ENCODE measurements at regions of chr6 and their contacts with region 1.

Region 1: GRCh38 chr6:88165844-88166492 is at the start of gene CNR1:
- DNase-seq: peak in 1 of 2 donors; percentile 69
- H3K4me3 ChIP-seq: peak within 1 kb of the TSS; percentile 81 to 84
- H3K27ac ChIP-seq: peak within 1 kb of the TSS in 1 of 2 donors; percentile 43
- H3K4me1 ChIP-seq: peaks cover 0 to 3% of the 10 kb centered on the region in 2 donors
- H3K27me3 ChIP-seq: peaks cover 17% of the 10 kb centered on the region
- CTCF ChIP-seq: no peak
- total RNA-seq, gene CNR1: 35.0 TPM

Region 2: DNA sequence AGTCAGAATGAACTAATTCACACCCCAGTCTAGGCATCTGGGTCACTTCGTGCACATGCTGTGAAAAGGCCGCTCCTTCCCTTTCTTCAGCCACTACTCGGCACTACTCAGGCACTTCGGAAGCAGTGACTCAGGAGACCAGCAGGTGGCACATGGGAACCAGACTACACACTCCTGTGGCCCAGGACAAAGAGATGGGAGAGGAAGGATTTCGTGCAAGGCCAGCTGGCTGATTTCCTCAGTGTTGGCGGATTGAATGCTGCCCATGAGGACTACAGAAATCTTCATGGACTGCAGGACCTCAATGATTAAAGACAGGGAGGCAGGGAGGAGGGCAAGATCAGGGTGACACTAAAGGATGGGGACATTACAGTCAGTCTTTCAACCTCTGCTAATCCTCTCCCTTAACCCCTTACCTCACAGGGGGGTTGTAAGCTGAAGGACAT is 236.1 kb before region 1 on chr6:
- intact Hi-C with region 1: loop called (anchors 5 kb)
- DNase-seq: peak; percentile 37 to 91
- H3K4me3 ChIP-seq: no peak overlapping the region
- H3K27ac ChIP-seq: no peak overlapping the region
- H3K4me1 ChIP-seq: no peaks in the 10 kb centered on the region
- H3K27me3 ChIP-seq: no peaks in the 10 kb centered on the region
- CTCF ChIP-seq: peak; percentile 64 to 90 (median 79)

Region 3: GRCh38 chr6:87944541-87944954 is 221.4 kb before region 1 on chr6:
- intact Hi-C with region 1: loop called (anchors 5 kb)
- DNase-seq: peak; percentile 63 to 88
- H3K4me3 ChIP-seq: peak overlapping the region in 1 of 2 donors; percentile 18
- H3K27ac ChIP-seq: peak overlapping the region; percentile 73 to 80
- H3K4me1 ChIP-seq: peaks cover 3 to 14% of the 10 kb centered on the region in 2 donors
- H3K27me3 ChIP-seq: no peaks in the 10 kb centered on the region
- CTCF ChIP-seq: peak in 2 of 3 experiments; percentile 13 to 46

Region 4: GRCh38 chr6:88179692-88180091 is 13.7 kb after region 1 on chr6:
- intact Hi-C with region 1: no loop called
- DNase-seq: no peak
- H3K4me3 ChIP-seq: no peak overlapping the region
- H3K27ac ChIP-seq: no peak overlapping the region
- H3K4me1 ChIP-seq: no peaks in the 10 kb centered on the region
- H3K27me3 ChIP-seq: no peaks in the 10 kb centered on the region
- CTCF ChIP-seq: no peak

Region 5: DNA sequence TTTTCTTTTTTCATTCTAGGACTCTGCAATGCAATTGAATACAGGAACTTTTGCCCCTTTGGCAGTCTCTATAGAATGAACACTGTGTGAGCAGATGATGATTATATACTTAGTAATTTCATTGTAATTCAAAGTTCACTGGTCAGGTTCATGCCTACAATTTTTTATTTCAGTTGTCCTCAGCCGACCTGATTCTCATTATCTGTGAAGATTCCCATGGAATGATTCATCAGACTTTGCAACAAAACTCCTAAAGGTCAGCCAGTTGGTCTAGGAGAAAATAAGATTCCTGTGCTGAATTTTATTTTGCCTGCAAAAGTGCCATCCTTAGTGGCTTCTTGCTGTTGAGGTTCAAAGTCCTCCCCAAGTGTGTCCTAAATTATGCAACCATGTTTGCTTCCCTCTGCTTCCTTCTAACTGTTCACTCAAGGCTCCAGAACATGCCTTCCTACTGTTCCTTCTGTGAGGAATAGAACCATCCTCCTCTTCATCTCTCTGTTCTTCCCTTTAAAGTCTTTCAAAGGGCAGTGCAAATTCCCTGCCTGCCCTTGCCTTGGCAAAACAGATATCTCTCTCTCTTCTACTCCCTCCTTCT is 194.3 kb after region 1 on chr6:
- intact Hi-C with region 1: loop called (anchors 10 kb)
- DNase-seq: no peak
- H3K4me3 ChIP-seq: no peak overlapping the region
- H3K27ac ChIP-seq: no peak overlapping the region
- H3K4me1 ChIP-seq: no peaks in the 10 kb centered on the region
- H3K27me3 ChIP-seq: no peaks in the 10 kb centered on the region
- CTCF ChIP-seq: no peak

Region 6: GRCh38 chr6:88492824-88493223 is 326.9 kb after region 1 on chr6:
- intact Hi-C with region 1: loop called (anchors 5 kb)
- DNase-seq: no peak
- H3K4me3 ChIP-seq: no peak overlapping the region
- H3K27ac ChIP-seq: no peak overlapping the region
- H3K4me1 ChIP-seq: no peaks in the 10 kb centered on the region
- H3K27me3 ChIP-seq: no peaks in the 10 kb centered on the region
- CTCF ChIP-seq: peak in 2 of 3 experiments; percentile 26 to 31

Region 7: GRCh38 chr6:88870717-88871330 is 704.9 kb after region 1 on chr6:
- intact Hi-C with region 1: loop called (anchors 10 kb)
- DNase-seq: no peak
- H3K4me3 ChIP-seq: no peak overlapping the region
- H3K27ac ChIP-seq: no peak overlapping the region
- H3K4me1 ChIP-seq: peaks cover 0 to 9% of the 10 kb centered on the region in 2 donors
- H3K27me3 ChIP-seq: no peaks in the 10 kb centered on the region
- CTCF ChIP-seq: peak; percentile 51 to 79 (median 64)

Measured in ascending aorta (tissue), 2 donors.